ENCODE measurements at regions of chr12 and their contacts with region 1.

Region 1: DNA sequence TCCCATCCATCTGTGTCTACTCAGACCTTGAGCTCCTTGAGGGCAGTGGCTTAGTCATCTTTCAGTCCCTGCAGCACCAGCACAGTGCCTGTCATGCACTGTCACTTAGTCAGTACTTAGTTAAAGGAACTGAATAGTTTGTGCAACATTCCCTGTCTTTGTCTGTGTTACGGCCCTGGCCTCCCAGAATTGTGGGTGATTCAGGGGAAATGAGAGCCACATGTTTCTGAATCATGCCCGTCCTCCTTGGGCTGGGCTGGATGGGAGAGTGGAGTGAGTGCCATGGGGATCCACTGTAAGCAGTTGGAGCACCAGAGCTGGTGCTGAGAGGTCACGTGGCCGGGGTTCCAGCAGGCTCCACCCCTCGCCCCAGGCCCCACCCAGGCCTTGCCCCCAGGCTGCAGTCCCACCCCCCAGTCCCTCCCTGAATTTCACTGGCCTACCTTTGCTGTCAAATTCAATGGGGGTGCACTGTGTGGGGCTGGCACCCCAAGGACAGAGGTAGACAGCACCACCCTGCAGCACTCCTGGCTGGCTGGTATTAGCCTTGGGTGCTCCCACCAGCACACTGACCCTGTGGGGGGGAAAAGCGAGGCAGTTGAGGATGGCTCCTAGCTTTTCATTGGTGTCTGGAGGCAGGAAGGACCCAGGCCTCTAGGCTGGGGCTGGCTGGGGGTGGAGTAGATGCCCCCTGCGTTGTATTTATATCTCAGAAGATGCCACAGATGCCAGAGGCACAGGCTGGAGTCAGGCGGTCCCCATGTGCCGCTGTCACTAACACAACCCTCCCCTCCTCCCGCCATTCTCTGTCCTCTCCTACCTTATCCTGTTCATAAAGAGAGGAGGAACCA is 7.5 kb downstream of the ITGA5 start:
- DNase-seq: peak; percentile 75
- H3K4me3 Mint-ChIP-seq: peak overlapping the region; percentile 72
- H3K27ac Mint-ChIP-seq: peak overlapping the region; percentile 91
- H3K4me1 Mint-ChIP-seq: peaks cover 68% of the 10 kb centered on the region
- H3K27me3 Mint-ChIP-seq: no peaks in the 10 kb centered on the region

Region 2: GRCh38 chr12:54425702-54426101 is 14.1 kb after region 1 on chr12:
- CTCF ChIA-PET with region 1: interaction called, 282 read pairs
- POLR2A ChIA-PET with region 1: interaction called, 32 read pairs
- DNase-seq: no peak
- H3K4me3 Mint-ChIP-seq: no peak overlapping the region
- H3K27ac Mint-ChIP-seq: no peak overlapping the region
- H3K4me1 Mint-ChIP-seq: peaks cover 36% of the 10 kb centered on the region
- H3K27me3 Mint-ChIP-seq: peaks cover 69% of the 10 kb centered on the region

Region 3: GRCh38 chr12:54431911-54432814 is 20.5 kb after region 1 on chr12:
- CTCF ChIA-PET with region 1: interaction called, 481 read pairs
- POLR2A ChIA-PET with region 1: interaction called, 32 read pairs
- DNase-seq: peak; percentile 52
- H3K4me3 Mint-ChIP-seq: peak overlapping the region; percentile 63
- H3K27ac Mint-ChIP-seq: peak overlapping the region; percentile 76
- H3K4me1 Mint-ChIP-seq: peaks cover 46% of the 10 kb centered on the region
- H3K27me3 Mint-ChIP-seq: peaks cover 25% of the 10 kb centered on the region

Region 4: DNA sequence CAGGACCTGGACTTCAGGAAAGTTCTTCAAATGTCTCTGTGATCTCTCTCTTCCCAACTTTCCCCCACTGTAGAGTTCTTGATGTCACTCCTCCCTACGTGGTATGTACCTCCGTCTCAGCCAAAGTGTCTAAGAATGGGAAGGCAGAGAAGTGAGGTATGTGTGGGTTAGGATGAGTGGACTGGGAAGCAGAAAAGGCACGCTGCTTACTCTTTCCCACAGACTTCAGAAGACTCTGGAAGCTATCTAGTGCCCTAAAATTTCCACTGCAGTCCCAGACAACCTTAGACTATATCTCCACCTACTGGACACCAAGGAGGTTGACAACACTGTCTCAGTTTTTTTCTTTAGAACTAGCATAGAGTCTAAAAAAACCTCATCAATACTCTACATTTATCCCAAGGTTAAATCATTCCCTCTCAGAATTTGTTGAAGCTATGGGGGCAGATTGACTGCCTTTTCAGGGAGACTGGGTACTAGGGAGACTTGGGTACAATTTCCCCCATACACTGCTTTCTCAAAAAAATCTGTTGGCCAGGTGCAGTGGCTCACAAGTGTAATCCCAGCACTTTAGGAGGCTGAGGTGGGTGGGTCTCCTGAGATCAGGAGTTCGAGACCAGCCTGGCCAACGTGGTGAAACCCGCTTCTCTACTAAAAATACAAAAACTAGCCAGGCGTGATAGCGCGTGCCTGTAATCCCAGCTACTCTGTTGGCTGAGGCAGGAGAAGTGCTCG is 28.1 kb after region 1 on chr12:
- CTCF ChIA-PET with region 1: interaction called, 481 read pairs
- POLR2A ChIA-PET with region 1: interaction called, 27 read pairs
- DNase-seq: no peak
- H3K4me3 Mint-ChIP-seq: no peak overlapping the region
- H3K27ac Mint-ChIP-seq: no peak overlapping the region
- H3K4me1 Mint-ChIP-seq: peaks cover 5% of the 10 kb centered on the region
- H3K27me3 Mint-ChIP-seq: peaks cover 24% of the 10 kb centered on the region

Region 5: DNA sequence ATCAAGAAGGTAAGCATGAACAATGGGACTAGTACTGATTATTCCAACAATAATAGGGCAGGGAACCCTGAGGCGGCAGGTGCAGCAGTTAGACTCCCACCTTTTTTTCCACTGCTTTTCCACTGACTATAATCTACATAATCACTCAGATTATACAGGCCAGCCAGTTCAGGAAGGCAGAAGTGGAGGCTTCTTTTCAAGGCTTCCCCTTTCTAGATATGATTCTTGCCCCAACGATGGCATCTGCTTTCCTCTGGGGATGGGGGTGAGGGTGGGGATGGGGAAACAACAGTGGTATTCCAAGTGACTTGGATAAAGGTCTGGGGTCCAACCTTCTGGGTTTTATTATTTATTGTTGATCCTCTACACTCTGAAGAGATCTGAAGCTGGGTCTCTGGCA is 86.3 kb after region 1 on chr12:
- CTCF ChIA-PET with region 1: no interaction called
- POLR2A ChIA-PET with region 1: interaction called, 19 read pairs
- DNase-seq: no peak
- H3K4me3 Mint-ChIP-seq: peak overlapping the region; percentile 99
- H3K27ac Mint-ChIP-seq: peak overlapping the region; percentile 95
- H3K4me1 Mint-ChIP-seq: peaks cover 45% of the 10 kb centered on the region
- H3K27me3 Mint-ChIP-seq: no peaks in the 10 kb centered on the region